HCT116 (cell line): ENCODE measurements at regions of chr7 and their contacts with region 1.

Region 1: GRCh38 chr7:98568891-98569290 is 48.2 kb upstream of the NPTX2 start:
- DNase-seq: no peak
- ATAC-seq: no peak
- H3K4me3 ChIP-seq: no peak overlapping the region
- H3K27ac ChIP-seq: no peak overlapping the region
- H3K4me1 ChIP-seq: no peaks in the 10 kb centered on the region
- H3K27me3 ChIP-seq: no peaks in the 10 kb centered on the region
- CTCF ChIP-seq: no peak
- POLR2A ChIP-seq: no peak
- RAD21 ChIP-seq: no peak

Region 2: GRCh38 chr7:98372993-98373392 is 195.9 kb before region 1 on chr7:
- CTCF ChIA-PET with region 1: no interaction called
- POLR2A ChIA-PET with region 1: no interaction called
- RAD21 ChIA-PET with region 1: no interaction called
- intact Hi-C with region 1: no loop called
- DNase-seq: no peak
- ATAC-seq: no peak
- H3K4me3 ChIP-seq: no peak overlapping the region
- H3K27ac ChIP-seq: peak overlapping the region; percentile 8; the same call in 1 of the 2 replicates
- H3K4me1 ChIP-seq: peaks cover 50 to 57% of the 10 kb centered on the region in 2 experiments
- H3K27me3 ChIP-seq: no peaks in the 10 kb centered on the region
- CTCF ChIP-seq: no peak
- POLR2A ChIP-seq: no peak
- RAD21 ChIP-seq: no peak

Region 3: DNA sequence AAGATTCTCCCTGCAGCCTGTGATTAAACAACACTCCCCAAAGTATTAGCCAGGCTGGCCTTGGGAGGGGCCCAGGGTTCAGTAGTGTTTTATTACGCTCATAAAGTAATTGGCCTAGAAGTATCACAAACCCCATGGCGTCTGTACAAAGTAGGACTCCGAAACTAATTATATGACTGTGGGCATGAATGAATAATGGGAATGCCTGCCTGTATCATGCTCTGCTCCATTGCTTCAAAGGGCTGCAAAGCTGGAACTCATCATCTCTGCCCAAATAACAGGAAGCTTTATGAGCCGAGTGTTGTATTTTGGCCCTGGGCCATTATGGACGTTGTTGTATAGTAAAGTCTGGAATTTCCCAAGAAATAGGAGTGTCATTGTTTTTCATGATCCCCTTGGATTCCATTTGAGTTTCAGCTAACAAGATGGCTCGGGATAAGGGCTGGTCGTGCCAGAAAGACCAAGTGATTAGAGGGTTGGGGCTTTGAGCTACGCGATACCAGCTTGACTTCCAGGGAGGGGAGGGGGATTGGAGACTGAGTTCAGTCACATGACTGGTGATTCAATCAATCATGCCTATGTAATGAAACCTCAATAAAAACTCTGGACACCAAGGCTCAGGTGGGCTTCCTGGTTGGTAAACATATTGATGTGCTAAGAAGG is 17.1 kb before region 1 on chr7:
- CTCF ChIA-PET with region 1: no interaction called
- POLR2A ChIA-PET with region 1: no interaction called
- RAD21 ChIA-PET with region 1: no interaction called
- intact Hi-C with region 1: loop called (anchors 1 kb)
- DNase-seq: no peak
- ATAC-seq: no peak
- H3K4me3 ChIP-seq: no peak overlapping the region
- H3K27ac ChIP-seq: no peak overlapping the region
- H3K4me1 ChIP-seq: peaks cover 13 to 20% of the 10 kb centered on the region in 2 experiments
- H3K27me3 ChIP-seq: peaks cover 20% of the 10 kb centered on the region; the same call in 1 of the 2 replicates
- CTCF ChIP-seq: no peak
- POLR2A ChIP-seq: no peak
- RAD21 ChIP-seq: no peak